ENCODE measurements at regions of chr7 and their contacts with region 1.

Region 1: DNA sequence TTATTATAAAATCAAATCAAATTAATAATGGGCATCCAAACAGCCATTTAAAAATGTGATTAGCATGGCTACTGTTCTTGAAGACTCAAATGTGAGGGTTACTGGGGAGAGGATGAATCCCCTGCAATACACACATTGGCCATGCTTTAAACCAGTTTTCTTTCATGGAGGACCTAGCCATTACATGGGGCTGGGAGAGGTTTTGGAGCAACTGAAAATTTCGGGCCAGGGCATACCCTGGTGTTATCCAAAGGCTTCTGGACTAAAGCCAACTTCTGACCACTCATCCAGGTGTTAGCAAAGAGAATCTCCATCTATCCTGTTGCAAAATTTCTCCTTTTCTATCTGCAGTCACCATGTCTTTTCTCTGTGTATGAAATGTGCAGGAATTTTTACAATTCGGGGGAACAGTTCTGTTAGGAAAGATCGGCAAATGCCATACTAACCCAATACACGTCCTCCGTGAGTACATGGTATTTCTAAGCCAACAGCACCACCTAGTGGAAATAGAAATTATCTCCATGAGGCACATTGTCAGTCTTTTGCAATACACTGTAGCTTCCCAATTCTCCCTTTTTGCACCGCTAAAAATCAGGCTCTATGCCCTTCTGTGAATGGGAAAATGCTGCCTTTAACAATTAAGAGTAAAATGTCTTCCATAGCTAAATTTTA is 47.0 kb upstream of the ZNF107 start:
- DNase-seq: peak in 1 of 2 donors; percentile 6
- ATAC-seq: peak in 1 of 2 donors; percentile 66
- H3K4me3 ChIP-seq: no peak overlapping the region
- H3K27ac ChIP-seq: no peak overlapping the region
- H3K4me1 ChIP-seq: no peaks in the 10 kb centered on the region
- H3K27me3 ChIP-seq: no peaks in the 10 kb centered on the region
- CTCF ChIP-seq: peak; percentile 62 to 80 (median 72)
- POLR2A ChIP-seq: no peak

Region 2: GRCh38 chr7:63008366-63008765 is 1610.6 kb before region 1 on chr7:
- in situ Hi-C with region 1: no loop called
- intact Hi-C with region 1: loop called (anchors 10 kb)
- DNase-seq: no peak
- ATAC-seq: no peak
- H3K4me3 ChIP-seq: no peak overlapping the region
- H3K27ac ChIP-seq: no peak overlapping the region
- H3K4me1 ChIP-seq: no peaks in the 10 kb centered on the region
- H3K27me3 ChIP-seq: no peaks in the 10 kb centered on the region
- CTCF ChIP-seq: no peak
- POLR2A ChIP-seq: no peak

Region 3: DNA sequence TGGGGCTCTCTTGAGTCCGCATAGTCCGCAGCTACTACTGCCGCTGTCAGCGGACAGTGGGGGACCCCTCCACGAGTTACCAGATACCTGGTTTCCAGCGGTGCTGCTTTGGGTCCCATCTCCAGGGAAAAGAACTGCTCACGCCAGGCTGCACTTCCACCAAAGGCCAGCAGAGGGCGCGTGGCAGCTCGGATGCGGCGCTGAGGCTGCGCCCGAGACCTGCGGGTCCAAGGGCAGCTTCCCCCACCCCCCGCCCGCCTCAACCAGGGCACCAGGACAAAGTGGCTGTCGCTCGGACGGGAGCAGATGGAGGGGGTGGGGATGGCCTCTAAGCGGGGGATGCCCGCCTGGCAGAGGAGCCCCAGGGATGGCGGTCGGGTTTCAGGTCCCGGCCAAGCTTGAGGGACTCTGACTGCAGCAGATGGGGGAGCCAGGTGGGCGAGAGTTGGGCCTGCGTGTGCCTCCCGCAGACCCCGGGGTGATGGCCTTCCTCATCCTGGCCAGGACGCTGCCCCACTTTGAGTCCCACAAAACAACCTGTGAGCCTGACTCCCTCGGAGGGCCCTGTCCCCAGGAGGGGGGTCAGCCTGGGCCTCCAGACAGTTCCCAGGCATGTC is 435.7 kb before region 1 on chr7:
- in situ Hi-C with region 1: loop called (anchors 10 to 25 kb)
- intact Hi-C with region 1: loop called (anchors 5 kb)
- DNase-seq: no peak
- ATAC-seq: no peak
- H3K4me3 ChIP-seq: no peak overlapping the region
- H3K27ac ChIP-seq: no peak overlapping the region
- H3K4me1 ChIP-seq: no peaks in the 10 kb centered on the region
- H3K27me3 ChIP-seq: peaks cover 0 to 11% (median 5%) of the 10 kb centered on the region in 3 donors
- CTCF ChIP-seq: peak; percentile 43 to 72 (median 62)
- POLR2A ChIP-seq: no peak

Measured in gastrocnemius medialis (tissue), 4 donors.